WTC11 (cell line): ENCODE measurements at regions of chr6 and their contacts with region 1.

Region 1: GRCh38 chr6:36851149-36851614 is 11.9 kb upstream of the CPNE5 start:
- DNase-seq: peak; percentile 50
- ATAC-seq: peak; percentile 9; the same call in 1 of the 2 replicates
- H3K4me3 Mint-ChIP-seq: no peak overlapping the region
- H3K27ac Mint-ChIP-seq: no peak overlapping the region; the same call in 1 of the 2 replicates
- H3K4me1 Mint-ChIP-seq: peaks cover 33% of the 10 kb centered on the region
- H3K27me3 Mint-ChIP-seq: no peaks in the 10 kb centered on the region; the same call in none of the 2 replicates
- CTCF ChIP-seq: peak; percentile 75

Region 2: DNA sequence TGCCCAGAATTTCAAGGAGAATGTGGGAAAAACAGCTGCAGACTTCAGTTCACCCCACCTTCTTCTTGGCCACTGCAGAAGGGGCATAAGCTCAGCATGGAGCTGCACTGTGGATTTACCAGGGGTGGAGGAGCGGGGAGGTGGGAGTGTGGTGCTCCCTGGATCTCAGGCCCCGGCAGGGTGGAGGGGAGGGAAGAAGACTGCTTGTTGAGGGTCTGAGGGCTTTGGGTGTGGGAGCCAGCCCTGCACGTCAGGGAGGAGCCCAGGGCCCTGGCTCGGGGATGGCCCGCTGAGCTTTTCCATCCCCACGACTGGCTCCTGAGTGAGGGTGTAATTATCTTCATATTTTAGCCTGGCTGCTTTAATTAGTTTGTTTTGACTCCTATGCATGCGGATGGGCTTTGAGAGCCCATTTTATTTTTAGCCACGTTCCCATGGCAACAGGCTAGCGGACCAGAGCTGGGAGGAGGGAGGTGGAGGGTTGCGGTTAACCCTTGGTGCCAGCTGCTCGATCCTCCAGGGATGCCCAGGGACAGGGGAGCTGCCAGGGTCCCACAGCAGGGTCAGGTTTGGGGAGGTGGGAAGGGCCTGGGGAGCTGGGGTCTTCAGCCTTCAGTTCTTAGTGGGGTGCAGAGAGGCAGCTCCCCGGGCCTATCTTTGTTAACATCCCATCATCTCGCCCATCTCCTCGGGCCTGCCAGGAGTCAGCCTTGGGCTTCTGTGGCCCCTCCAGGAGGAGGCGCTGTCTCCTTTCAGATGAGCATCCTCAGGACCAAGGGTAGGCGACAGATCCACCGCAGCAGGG is 85.4 kb before region 1 on chr6:
- CTCF ChIA-PET with region 1: interaction called, 179 read pairs
- POLR2A ChIA-PET with region 1: interaction called, 7 read pairs
- DNase-seq: peak; percentile 91
- ATAC-seq: peak; percentile 93
- H3K4me3 Mint-ChIP-seq: no peak overlapping the region
- H3K27ac Mint-ChIP-seq: no peak overlapping the region
- H3K4me1 Mint-ChIP-seq: peaks cover 17% of the 10 kb centered on the region
- H3K27me3 Mint-ChIP-seq: no peaks in the 10 kb centered on the region
- CTCF ChIP-seq: peak; percentile 91

Region 3: DNA sequence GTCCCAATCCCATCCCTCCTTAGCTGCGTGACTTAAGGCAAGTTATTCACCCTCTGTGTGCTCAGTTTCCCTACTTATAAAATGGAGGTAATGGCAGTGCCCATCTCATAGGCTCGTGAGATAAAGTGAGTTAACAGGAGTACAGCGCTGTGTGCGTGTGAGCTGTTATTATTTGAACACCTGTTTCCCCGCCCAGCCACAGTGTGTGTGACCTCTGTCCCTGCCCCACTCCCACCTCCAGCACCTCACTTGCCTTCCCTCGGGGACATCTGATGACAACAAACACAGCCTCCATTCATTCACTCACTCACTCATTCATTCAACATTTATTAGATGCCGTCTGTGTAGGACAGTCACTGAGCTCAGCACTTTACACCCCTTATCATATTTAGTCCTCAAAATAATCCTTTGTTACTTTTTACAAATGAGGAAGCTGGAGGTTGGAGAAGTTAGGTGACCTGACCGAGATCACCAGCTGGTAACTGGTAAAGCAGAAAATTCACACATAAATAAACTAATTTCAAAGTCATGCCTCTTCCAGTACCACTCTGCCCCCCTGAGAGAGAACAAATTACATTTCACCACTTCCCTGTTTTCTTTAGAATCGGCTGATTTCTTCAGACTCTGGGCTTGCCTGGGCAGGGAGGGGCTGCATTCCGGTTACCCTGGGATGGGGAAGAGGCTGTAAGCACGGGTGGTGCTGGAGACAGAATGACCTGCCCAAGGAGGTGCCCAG is 70.6 kb before region 1 on chr6:
- CTCF ChIA-PET with region 1: interaction called, 43 read pairs
- POLR2A ChIA-PET with region 1: interaction called, 5 read pairs
- DNase-seq: no peak
- ATAC-seq: no peak
- H3K4me3 Mint-ChIP-seq: no peak overlapping the region
- H3K27ac Mint-ChIP-seq: 0 out of 2 replicates have a peak overlapping the region, but pooled peaks have one; percentile 10
- H3K4me1 Mint-ChIP-seq: peaks cover 31% of the 10 kb centered on the region
- H3K27me3 Mint-ChIP-seq: no peaks in the 10 kb centered on the region
- CTCF ChIP-seq: no peak

Region 4: DNA sequence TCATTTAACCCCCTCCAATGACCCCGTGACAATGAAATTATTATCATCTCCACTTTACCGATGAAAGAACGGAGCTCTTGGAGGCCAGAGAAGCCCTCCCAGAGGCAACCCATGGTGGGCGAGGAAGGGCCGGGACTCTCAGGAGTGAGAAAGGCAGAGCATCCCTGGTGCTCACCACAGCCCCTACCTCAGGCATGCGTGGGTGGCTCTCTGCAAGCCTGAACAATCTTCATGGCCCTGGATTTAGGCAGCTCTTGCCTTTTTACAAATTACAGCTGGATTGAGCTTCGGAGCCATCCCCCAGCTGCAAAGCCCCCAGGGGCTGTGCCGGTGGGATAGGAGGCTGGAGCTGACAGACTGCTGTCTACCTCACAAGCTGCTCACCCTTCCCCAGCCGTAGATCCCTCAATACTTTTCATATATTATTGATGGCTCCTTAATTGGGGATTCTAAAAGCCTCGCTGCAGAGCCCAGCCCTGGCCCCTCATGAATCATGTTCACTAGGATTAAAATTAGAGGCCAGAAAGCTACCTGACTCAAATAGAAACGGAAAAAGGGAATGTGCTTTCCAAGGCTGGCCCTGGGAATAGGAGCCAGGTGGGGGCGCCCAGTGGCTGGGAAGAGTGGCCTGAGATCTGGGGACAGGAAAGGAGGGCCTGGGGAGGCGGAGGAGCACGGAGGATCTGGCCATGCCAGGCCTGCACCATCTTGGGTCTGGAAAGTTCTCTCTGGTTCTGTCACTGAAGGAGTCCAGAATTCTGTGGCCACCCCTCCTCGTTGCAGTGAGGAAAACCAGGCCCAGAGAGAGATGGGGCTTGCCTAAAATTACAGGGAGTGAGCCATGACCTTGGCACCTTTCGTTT is 41.0 kb before region 1 on chr6:
- CTCF ChIA-PET with region 1: interaction called, 61 read pairs
- POLR2A ChIA-PET with region 1: no interaction called
- DNase-seq: peak; percentile 55
- ATAC-seq: peak; percentile 72
- H3K4me3 Mint-ChIP-seq: no peak overlapping the region
- H3K27ac Mint-ChIP-seq: no peak overlapping the region
- H3K4me1 Mint-ChIP-seq: peaks cover 22% of the 10 kb centered on the region
- H3K27me3 Mint-ChIP-seq: peaks cover 5% of the 10 kb centered on the region; the same call in 1 of the 2 replicates
- CTCF ChIP-seq: no peak

Region 5: DNA sequence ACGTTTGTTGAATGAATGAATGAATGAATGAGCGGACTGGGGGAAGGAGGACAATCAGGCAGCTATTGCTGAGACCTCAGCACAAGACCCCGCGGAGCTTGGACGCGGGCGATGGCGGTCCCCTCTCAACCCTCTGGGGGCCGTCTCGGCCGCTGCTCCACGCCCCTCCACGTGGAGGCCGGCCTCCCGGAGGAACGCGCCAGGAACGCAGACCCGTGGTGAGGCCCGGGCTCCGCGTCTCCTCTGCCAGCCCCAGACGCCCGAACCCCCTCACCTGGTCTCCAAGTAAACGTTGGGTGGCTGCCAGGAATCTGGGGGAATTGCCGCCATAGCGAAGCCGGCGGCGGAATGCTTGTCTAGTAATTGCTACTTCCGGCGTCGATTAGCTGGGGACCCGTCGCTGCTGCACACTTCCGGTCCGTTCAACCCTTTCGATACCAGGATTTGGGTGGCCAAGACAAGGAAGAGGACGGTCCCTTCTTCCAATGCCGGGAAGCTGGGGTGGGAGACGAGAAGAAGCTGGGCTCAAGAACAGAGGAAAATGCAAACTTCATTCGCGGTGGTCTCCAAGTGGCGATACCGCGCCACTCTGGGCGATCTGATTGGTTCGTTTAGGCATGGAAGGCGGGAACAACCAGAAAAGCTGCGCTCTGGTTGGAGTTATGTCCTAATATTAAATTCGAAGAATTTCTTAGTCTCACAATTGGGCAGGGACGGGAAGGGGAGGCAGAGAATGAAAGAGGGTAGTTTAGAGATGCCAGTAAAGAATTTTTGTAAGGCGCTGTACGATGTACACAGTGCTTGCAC is 23.5 kb after region 1 on chr6 and contains the start of gene PPIL1:
- CTCF ChIA-PET with region 1: interaction called, 22 read pairs
- POLR2A ChIA-PET with region 1: no interaction called
- DNase-seq: peak; percentile 74
- ATAC-seq: peak; percentile 87
- H3K4me3 Mint-ChIP-seq: peak within 1 kb of the TSS; percentile 93
- H3K27ac Mint-ChIP-seq: peak within 1 kb of the TSS; percentile 100
- H3K4me1 Mint-ChIP-seq: peaks cover 19% of the 10 kb centered on the region
- H3K27me3 Mint-ChIP-seq: peaks cover 17% of the 10 kb centered on the region
- CTCF ChIP-seq: no peak
- total RNA-seq, gene PPIL1: 64.2 to 69.8 TPM (median 66.6 TPM) in 3 replicates

Region 6: DNA sequence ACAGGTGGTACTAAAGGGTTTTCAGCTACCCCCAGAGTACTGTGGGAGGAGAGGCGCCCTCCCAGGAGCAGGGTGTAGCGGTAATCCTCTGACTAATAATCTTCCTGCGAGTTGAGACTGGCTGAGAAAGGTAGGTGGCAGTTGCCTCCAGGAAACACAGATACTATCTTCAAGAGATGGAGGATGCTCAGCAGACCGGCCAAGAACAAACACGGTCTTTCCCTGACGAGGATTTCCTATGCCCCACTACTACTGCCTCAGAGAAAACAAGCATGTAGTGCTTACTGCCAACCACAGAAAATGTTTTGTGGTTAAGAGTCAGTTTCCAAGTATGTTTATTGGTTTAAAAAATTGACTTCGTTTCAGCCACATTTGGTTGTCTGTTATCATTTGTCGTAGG is 61.4 kb after region 1 on chr6:
- CTCF ChIA-PET with region 1: interaction called, 11 read pairs
- POLR2A ChIA-PET with region 1: no interaction called
- DNase-seq: no peak
- ATAC-seq: no peak
- H3K4me3 Mint-ChIP-seq: no peak overlapping the region
- H3K27ac Mint-ChIP-seq: no peak overlapping the region
- H3K4me1 Mint-ChIP-seq: peaks cover 5% of the 10 kb centered on the region
- H3K27me3 Mint-ChIP-seq: no peaks in the 10 kb centered on the region
- CTCF ChIP-seq: no peak